ENCODE measurements at regions of chr16 and their contacts with region 1.

Region 1: GRCh38 chr16:4253394-4254150 is 11.7 kb upstream of the SRL start:
- DNase-seq: peak; percentile 99 to 100 (median 100)
- H3K4me3 ChIP-seq: peak overlapping the region; percentile 63 to 82 (median 77)
- H3K27ac ChIP-seq: peak overlapping the region in 1 of 2 experiments; percentile 85
- H3K4me1 ChIP-seq: peaks cover 0 to 4% (median 2%) of the 10 kb centered on the region in 4 experiments
- H3K27me3 ChIP-seq: no peaks in the 10 kb centered on the region

Region 2: GRCh38 chr16:4200000-4200780 is 53.4 kb before region 1 on chr16:
- CTCF ChIA-PET with region 1: interaction called, 25 read pairs
- POLR2A ChIA-PET with region 1: no interaction called
- DNase-seq: peak; percentile 66 to 72 (median 66)
- H3K4me3 ChIP-seq: peak overlapping the region in 2 of 7 experiments; percentile 15 to 33
- H3K27ac ChIP-seq: no peak overlapping the region
- H3K4me1 ChIP-seq: peaks cover 0 to 9% (median 7%) of the 10 kb centered on the region in 4 experiments
- H3K27me3 ChIP-seq: no peaks in the 10 kb centered on the region

Region 3: GRCh38 chr16:4239020-4239419 is 14.6 kb before region 1 on chr16:
- CTCF ChIA-PET with region 1: interaction called, 10 read pairs
- POLR2A ChIA-PET with region 1: no interaction called
- DNase-seq: peak; percentile 15 to 24 (median 23)
- H3K4me3 ChIP-seq: peak overlapping the region in 2 of 7 experiments; percentile 16 to 19
- H3K27ac ChIP-seq: no peak overlapping the region
- H3K4me1 ChIP-seq: peaks cover 0 to 17% (median 8%) of the 10 kb centered on the region in 4 experiments
- H3K27me3 ChIP-seq: peaks cover 0 to 2% (median 0%) of the 10 kb centered on the region in 5 experiments

Region 4: DNA sequence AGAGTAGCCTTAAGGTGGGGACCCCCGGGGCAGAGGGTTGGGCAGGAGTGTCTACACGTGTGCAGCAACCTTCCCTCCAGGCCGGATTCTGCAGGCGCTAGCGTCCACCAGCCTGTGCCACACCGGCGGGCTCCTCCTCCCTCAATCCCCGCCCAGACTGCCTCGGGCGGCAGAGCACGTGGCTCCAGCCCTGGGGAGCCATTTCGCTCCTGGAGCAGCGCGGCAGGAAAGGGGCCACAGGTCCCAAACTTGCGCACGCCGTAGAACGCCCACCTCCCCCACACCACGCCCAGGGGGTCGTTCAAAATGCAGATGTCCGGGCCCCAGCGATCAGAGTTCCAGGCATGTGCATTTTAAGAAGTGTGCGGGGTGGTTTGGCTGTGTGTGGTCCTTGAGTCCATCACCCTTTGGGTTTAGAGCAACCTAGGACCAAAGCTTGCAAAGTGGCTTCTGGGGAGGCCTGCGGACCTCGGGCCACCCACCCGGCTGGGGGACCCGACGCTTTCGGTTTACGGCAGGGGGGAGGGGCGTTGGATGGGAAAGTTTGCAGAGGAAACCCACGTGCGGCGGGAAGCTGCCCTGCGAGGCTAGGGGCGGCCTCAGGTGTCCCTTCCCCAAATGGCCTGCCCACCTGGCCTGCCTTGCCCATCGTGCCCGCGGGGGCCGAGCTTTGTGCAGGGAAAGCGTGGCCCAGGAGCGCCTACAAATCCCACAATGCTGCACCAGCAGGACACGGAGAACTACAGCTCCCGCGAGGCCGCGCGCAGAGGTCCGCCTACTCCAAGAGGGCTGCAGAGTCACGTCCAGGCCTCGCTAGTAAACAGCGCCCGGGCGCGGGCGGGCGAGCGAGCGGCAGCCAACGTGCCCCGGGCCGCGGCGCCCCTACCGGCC is 17.8 kb after region 1 on chr16:
- CTCF ChIA-PET with region 1: interaction called, 36 read pairs
- POLR2A ChIA-PET with region 1: interaction called, 6 read pairs
- DNase-seq: peak; percentile 92 to 96 (median 94)
- H3K4me3 ChIP-seq: peak overlapping the region; percentile 66 to 93 (median 85)
- H3K27ac ChIP-seq: peak overlapping the region in 1 of 2 experiments; percentile 79
- H3K4me1 ChIP-seq: peaks cover 0 to 27% (median 24%) of the 10 kb centered on the region in 4 experiments
- H3K27me3 ChIP-seq: no peaks in the 10 kb centered on the region

Region 5: DNA sequence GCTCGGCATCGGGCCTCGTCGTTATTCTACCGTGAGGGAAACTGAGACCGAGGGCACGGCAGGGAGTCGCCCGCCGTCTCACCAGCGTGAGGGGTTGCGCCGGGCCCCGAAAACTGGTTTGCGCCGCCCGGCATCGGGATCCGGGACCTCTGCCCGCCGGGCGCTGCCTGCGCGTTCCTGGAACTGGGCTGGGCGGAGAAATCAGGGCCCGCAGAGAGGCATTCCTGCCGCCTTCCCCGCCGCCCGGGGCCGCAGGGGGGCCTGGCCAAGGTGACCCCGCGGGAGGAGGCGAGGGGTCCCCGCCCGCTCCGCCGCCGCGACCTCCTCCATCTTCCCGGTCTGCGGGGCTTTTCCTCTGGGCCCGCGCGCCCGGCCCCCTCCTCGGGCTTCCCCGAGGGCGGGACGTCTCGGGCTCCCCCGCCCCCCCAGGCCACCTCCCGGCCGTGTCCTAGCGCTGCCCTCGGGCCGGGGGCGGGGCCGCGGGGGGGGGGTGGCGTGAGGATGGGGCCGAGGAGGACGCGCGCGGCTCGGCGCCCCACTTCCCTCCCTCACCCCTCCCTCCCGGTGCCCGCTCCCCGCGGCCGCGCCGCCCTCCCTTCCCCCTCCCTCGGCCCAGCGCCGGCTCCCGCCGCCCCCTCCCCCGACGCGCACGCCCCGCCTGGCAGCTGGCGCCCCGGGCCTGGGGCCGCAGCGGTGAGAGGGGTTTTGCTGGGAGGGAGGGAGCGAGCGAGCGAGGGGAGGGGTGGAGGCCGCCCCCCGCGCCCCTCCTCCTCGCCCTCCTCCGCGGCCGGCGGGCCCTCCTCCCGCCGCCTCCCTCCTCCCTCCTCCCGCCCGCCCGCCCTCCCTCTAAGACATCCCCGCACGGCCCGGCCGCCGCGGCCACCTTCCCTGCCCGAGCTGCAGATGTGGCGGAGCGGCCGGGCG is 61.9 kb after region 1 on chr16 and contains the start of gene GLIS2:
- CTCF ChIA-PET with region 1: no interaction called
- POLR2A ChIA-PET with region 1: no interaction called
- DNase-seq: peak in 1 of 3 donors; percentile 54
- H3K4me3 ChIP-seq: peak within 1 kb of the TSS; percentile 6 to 63 (median 49)
- H3K27ac ChIP-seq: no peak within 1 kb of the TSS
- H3K4me1 ChIP-seq: peaks cover 0 to 17% (median 16%) of the 10 kb centered on the region in 4 experiments
- H3K27me3 ChIP-seq: peaks cover 0 to 37% (median 17%) of the 10 kb centered on the region in 5 experiments

Measured in common myeloid progenitor, CD34-positive (primary cell).